Natural killer cell (primary cell): ENCODE measurements at regions of chr12 and their contacts with region 1.

Region 1: GRCh38 chr12:10293570-10294227 is 14.0 kb upstream of the KLRD1 start:
- DNase-seq: peak in 1 of 2 donors; percentile 79
- ATAC-seq: peak; percentile 54 to 74 (median 71)
- H3K4me3 ChIP-seq: no peak overlapping the region
- H3K4me3 Mint-ChIP-seq: peak overlapping the region; percentile 60
- H3K27ac ChIP-seq: peak overlapping the region; percentile 67
- H3K27ac Mint-ChIP-seq: peak overlapping the region; percentile 88 to 90
- H3K4me1 ChIP-seq: peaks cover 41% of the 10 kb centered on the region
- H3K4me1 Mint-ChIP-seq: peaks cover 71 to 79% of the 10 kb centered on the region in 2 donors
- H3K27me3 ChIP-seq: no peaks in the 10 kb centered on the region
- H3K27me3 Mint-ChIP-seq: no peaks in the 10 kb centered on the region
- CTCF ChIP-seq: no peak

Region 2: DNA sequence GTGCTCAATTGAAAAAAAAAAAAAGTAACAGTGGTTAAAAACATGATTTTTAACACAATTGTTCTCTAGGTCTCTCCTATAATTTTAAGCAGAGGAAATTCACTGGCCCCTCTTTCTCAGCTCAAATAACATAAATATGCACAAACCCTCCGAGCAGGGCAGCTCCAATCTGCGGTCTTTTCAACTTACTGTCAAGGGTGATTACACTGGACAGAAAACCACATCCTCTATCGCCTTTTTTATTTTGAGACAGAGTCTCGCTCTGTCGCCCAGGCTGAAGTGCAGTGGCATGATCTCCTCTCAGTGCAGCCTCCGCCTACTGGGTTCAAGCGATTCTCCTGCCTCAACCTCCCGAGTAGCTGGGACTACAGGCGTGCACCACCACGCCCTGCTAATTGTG is 97.5 kb before region 1 on chr12:
- intact Hi-C with region 1: no loop called
- DNase-seq: peak; percentile 22
- ATAC-seq: peak; percentile 72 to 84 (median 82)
- H3K4me3 ChIP-seq: no peak overlapping the region
- H3K4me3 Mint-ChIP-seq: peak overlapping the region; percentile 64
- H3K27ac ChIP-seq: no peak overlapping the region
- H3K27ac Mint-ChIP-seq: peak overlapping the region; percentile 67 to 83
- H3K4me1 ChIP-seq: peaks cover 31% of the 10 kb centered on the region
- H3K4me1 Mint-ChIP-seq: peaks cover 28 to 37% of the 10 kb centered on the region in 2 donors
- H3K27me3 ChIP-seq: no peaks in the 10 kb centered on the region
- H3K27me3 Mint-ChIP-seq: peaks cover under 1 to 14% of the 10 kb centered on the region in 2 donors
- CTCF ChIP-seq: no peak

Region 3: DNA sequence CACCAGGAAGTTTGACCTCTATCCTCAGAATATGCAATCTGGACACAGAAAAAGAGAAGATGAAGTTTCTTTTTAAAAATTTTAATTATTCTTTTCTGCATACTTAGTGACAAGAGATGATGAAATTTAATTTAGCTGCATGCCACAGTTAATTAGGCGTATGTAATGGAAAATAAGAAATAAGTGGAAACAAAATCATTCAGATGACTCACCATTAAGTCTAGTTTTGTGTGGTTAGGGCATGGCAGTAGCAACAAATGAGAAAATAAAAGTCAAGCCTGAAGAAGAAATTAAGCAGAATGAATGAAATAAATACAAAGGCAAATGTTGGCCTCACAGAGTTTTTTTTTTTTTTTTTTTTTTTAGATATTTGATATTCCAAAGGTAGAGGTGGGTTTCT is 16.9 kb before region 1 on chr12:
- intact Hi-C with region 1: loop called (anchors 2 kb)
- DNase-seq: no peak
- ATAC-seq: peak in 1 of 3 donors; percentile 13
- H3K4me3 ChIP-seq: no peak overlapping the region
- H3K4me3 Mint-ChIP-seq: peak overlapping the region; percentile 45
- H3K27ac ChIP-seq: peak overlapping the region; percentile 25
- H3K27ac Mint-ChIP-seq: peak overlapping the region; percentile 72 to 73
- H3K4me1 ChIP-seq: peaks cover 22% of the 10 kb centered on the region
- H3K4me1 Mint-ChIP-seq: peaks cover 45 to 59% of the 10 kb centered on the region in 2 donors
- H3K27me3 ChIP-seq: no peaks in the 10 kb centered on the region
- H3K27me3 Mint-ChIP-seq: no peaks in the 10 kb centered on the region
- CTCF ChIP-seq: no peak